ENCODE measurements at regions of chr12 and their contacts with region 1.

Region 1: DNA sequence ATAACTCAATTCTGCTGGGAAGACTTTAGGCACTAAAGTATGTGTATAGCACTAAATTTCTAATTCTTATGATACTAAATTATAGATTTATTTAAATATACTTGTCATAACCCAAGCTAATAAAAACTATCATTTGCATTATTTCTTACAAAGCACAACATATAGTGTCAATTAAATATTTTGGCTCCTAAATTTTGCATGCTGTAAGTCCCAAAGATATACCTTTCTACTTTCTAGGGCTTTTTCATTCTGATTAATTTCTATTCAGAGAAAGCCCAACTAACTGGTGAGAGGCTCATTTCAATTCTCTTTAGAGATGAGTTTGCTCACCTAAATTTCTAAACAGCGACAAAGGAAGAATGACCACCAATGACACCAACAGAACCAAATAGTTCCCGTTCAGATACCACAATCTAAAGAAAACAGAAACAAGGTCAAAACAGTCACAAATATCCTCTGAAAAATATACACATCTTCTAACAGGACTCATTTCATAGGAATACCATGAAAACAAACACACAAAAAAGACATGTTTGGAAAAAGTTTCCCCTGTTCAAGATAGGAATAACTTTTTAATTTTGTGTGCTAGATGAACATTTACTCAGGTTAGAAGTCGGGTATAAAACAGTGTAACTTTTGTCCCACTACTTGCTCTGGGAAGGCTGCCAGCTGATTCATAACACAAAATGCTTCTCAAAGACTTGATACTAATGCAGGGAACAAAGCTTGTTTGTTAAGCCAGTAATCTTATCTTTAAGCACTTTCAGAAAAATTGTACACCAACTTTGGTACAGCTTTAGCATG is 7.6 kb downstream of the SLC38A2 start:
- DNase-seq: peak in 3 of 5 donors; percentile 67 to 75 (median 69)
- H3K4me3 ChIP-seq: peak overlapping the region; percentile 13
- H3K27ac ChIP-seq: peak overlapping the region in 1 of 2 donors; percentile 20
- H3K4me1 ChIP-seq: peaks cover 11% of the 10 kb centered on the region
- H3K27me3 ChIP-seq: no peaks in the 10 kb centered on the region
- CTCF ChIP-seq: no peak
- EP300 ChIP-seq: no peak
- POLR2A ChIP-seq: no peak

Region 2: DNA sequence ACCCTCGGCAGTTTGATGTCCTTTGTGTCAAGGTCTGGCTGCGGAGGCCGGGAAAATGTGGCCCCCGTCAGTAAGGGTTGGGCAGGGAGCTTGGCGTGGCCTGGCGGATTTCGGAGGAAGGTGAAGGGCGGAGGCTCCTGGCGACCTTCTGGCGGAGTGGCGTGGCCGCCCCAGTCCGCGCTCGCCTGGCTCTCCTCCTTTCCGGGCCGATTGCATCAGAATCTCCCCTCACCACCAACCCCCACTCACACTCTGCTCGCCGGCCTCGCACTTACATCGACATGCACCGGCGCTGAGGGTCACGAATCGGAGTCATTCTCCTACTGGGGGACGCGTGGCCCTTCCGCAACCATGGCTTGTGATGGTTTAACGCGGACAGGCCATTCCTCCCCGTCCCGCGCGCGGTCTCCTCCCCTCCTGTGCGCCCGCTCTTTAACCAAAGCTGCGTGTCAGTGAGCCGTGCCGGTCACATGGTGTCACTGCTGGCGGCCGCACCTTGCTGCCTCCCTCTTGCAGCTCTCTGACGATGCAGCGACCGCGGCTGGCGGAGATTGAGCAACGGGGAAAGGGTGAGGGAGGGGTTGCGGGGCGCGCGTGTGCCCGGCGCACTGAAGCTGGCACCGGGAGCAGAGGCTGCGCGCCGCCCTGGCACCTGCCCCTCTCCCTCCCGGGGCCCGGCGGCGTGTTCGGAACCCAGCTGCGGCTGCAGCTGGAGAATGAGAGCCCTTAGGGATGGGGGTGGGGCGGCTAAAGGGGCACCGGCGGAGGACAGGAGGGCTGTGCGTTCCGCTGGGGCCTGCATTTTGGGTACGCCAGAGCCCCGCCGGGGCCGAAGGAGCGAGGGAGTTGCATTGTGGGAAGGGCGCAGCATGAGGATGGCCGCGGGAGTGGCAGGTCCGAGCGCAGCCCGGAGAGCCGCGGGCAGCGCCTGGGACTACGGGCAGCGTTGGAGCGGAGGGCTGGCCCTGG is 96.1 kb before region 1 on chr12 and contains the start of gene SLC38A1:
- intact Hi-C with region 1: loop called in 2 of 4 experiments (anchors 5 to 10 kb)
- DNase-seq: peak; percentile 71 to 79 (median 74)
- H3K4me3 ChIP-seq: peak within 1 kb of the TSS; percentile 60
- H3K27ac ChIP-seq: peak within 1 kb of the TSS; percentile 53 to 66
- H3K4me1 ChIP-seq: no peaks in the 10 kb centered on the region
- H3K27me3 ChIP-seq: no peaks in the 10 kb centered on the region
- CTCF ChIP-seq: no peak
- EP300 ChIP-seq: no peak
- POLR2A ChIP-seq: peak; percentile 63
- total RNA-seq, gene SLC38A1: 21.9 to 86.3 (median 28.6) TPM

Measured in ovary (tissue), 10 donors.